Activated CD4-positive, alpha-beta T cell treated with anti-CD3 and anti-CD28 coated beads, Interleukin-2, amount 10 ng/mL, durations not matched to agents 24 days and 14 days (primary cell): ENCODE measurements at regions of chr2 and their contacts with region 1.

Region 1: DNA sequence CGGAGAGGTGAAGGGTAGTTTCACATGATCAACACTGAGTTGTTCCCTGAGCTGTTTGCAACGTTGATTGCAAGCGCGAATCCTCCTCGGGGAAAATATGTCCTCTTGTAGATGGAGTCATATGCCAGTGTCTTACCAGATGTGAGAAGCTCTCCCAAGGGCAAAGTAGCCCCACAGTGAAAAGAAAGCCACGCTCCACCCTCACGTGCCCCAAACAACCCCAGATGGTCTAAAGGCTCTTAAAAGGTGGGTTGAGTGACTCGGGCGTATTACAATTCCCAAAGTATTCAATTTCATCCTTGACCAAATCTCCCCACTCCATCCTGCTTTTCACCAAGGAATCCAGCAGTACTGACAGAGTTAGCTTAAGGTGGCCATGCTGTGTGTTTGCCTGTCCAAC is 332.1 kb upstream of the SOX11 start:
- DNase-seq: no peak
- H3K4me3 Mint-ChIP-seq: no peak overlapping the region
- H3K27ac Mint-ChIP-seq: no peak overlapping the region
- H3K4me1 Mint-ChIP-seq: no peaks in the 10 kb centered on the region
- H3K27me3 Mint-ChIP-seq: no peaks in the 10 kb centered on the region

Region 2: DNA sequence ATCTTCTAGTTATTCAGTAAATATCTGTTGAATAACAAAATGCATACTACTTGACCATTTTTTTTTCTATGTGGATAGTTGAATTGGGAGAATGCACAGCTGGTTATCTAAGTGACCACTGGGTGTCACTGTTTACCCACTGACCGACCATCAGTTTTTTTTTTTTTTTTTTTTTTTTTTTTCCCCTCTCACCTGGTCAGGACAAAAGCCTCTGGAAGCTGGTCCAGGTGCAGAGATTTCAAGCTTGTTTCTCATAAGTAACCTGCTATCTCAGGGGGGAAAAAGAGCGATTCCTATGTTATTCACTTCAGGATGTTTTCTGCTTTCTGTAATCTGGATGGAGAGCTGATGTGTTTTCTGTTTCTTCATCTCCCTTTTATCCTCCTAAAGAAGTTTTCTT is 1400.7 kb before region 1 on chr2:
- intact Hi-C with region 1: loop called (anchors 5 kb)
- DNase-seq: peak; percentile 56
- H3K4me3 Mint-ChIP-seq: no peak overlapping the region
- H3K27ac Mint-ChIP-seq: no peak overlapping the region
- H3K4me1 Mint-ChIP-seq: no peaks in the 10 kb centered on the region
- H3K27me3 Mint-ChIP-seq: no peaks in the 10 kb centered on the region

Region 3: GRCh38 chr2:5387421-5387820 is 27.3 kb after region 1 on chr2:
- intact Hi-C with region 1: no loop called
- DNase-seq: no peak
- H3K4me3 Mint-ChIP-seq: no peak overlapping the region
- H3K27ac Mint-ChIP-seq: no peak overlapping the region
- H3K4me1 Mint-ChIP-seq: no peaks in the 10 kb centered on the region
- H3K27me3 Mint-ChIP-seq: no peaks in the 10 kb centered on the region

Region 4: GRCh38 chr2:6773007-6773693 is 1413.1 kb after region 1 on chr2:
- intact Hi-C with region 1: loop called (anchors 5 kb)
- DNase-seq: peak; percentile 92
- H3K4me3 Mint-ChIP-seq: no peak overlapping the region
- H3K27ac Mint-ChIP-seq: no peak overlapping the region
- H3K4me1 Mint-ChIP-seq: peaks cover 9% of the 10 kb centered on the region
- H3K27me3 Mint-ChIP-seq: peaks cover 18% of the 10 kb centered on the region